Psoas muscle (tissue), 8 donors: ENCODE measurements at regions of chr2 and their contacts with region 1.

Region 1: GRCh38 chr2:63555939-63556338 is 32.3 kb downstream of the WDPCP start:
- DNase-seq: no peak
- ATAC-seq: no peak
- H3K4me3 ChIP-seq: no peak overlapping the region
- H3K27ac ChIP-seq: no peak overlapping the region
- H3K4me1 ChIP-seq: peaks cover 13% of the 10 kb centered on the region
- H3K27me3 ChIP-seq: no peaks in the 10 kb centered on the region
- CTCF ChIP-seq: no peak

Region 2: GRCh38 chr2:61816480-61817355 is 1739.2 kb before region 1 on chr2:
- intact Hi-C with region 1: loop called in 1 of 2 experiments (anchors 5 kb)
- DNase-seq: no peak
- ATAC-seq: peak; percentile 44 to 60 (median 48)
- H3K4me3 ChIP-seq: peak overlapping the region; percentile 8
- H3K27ac ChIP-seq: no peak overlapping the region
- H3K4me1 ChIP-seq: no peaks in the 10 kb centered on the region
- H3K27me3 ChIP-seq: no peaks in the 10 kb centered on the region
- CTCF ChIP-seq: no peak

Region 3: GRCh38 chr2:63104482-63104881 is 451.5 kb before region 1 on chr2:
- intact Hi-C with region 1: no loop called
- DNase-seq: no peak
- ATAC-seq: no peak
- H3K4me3 ChIP-seq: no peak overlapping the region
- H3K27ac ChIP-seq: no peak overlapping the region
- H3K4me1 ChIP-seq: no peaks in the 10 kb centered on the region
- H3K27me3 ChIP-seq: no peaks in the 10 kb centered on the region
- CTCF ChIP-seq: no peak

Region 4: GRCh38 chr2:63506320-63506719 is 49.6 kb before region 1 on chr2:
- intact Hi-C with region 1: no loop called
- DNase-seq: no peak
- ATAC-seq: no peak
- H3K4me3 ChIP-seq: no peak overlapping the region
- H3K27ac ChIP-seq: no peak overlapping the region
- H3K4me1 ChIP-seq: peaks cover 7% of the 10 kb centered on the region
- H3K27me3 ChIP-seq: no peaks in the 10 kb centered on the region
- CTCF ChIP-seq: no peak